ENCODE measurements at regions of chr16 and their contacts with region 1.

Region 1: GRCh38 chr16:31094424-31095120 is at the start of gene VKORC1:
- DNase-seq: peak; percentile 96
- ATAC-seq: peak; percentile 92
- H3K4me3 Mint-ChIP-seq: peak within 1 kb of the TSS; percentile 98
- H3K27ac Mint-ChIP-seq: peak within 1 kb of the TSS; percentile 89
- H3K4me1 Mint-ChIP-seq: peaks cover 25% of the 10 kb centered on the region
- H3K27me3 Mint-ChIP-seq: no peaks in the 10 kb centered on the region
- total RNA-seq, gene VKORC1: 59.6 to 64.2 TPM

Region 2: GRCh38 chr16:30677931-30678585 is 416.5 kb before region 1 on chr16:
- CTCF ChIA-PET with region 1: no interaction called
- POLR2A ChIA-PET with region 1: no interaction called
- intact Hi-C with region 1: no loop called
- DNase-seq: no peak
- ATAC-seq: no peak
- H3K4me3 Mint-ChIP-seq: no peak overlapping the region
- H3K27ac Mint-ChIP-seq: no peak overlapping the region
- H3K4me1 Mint-ChIP-seq: no peaks in the 10 kb centered on the region
- H3K27me3 Mint-ChIP-seq: no peaks in the 10 kb centered on the region

Region 3: DNA sequence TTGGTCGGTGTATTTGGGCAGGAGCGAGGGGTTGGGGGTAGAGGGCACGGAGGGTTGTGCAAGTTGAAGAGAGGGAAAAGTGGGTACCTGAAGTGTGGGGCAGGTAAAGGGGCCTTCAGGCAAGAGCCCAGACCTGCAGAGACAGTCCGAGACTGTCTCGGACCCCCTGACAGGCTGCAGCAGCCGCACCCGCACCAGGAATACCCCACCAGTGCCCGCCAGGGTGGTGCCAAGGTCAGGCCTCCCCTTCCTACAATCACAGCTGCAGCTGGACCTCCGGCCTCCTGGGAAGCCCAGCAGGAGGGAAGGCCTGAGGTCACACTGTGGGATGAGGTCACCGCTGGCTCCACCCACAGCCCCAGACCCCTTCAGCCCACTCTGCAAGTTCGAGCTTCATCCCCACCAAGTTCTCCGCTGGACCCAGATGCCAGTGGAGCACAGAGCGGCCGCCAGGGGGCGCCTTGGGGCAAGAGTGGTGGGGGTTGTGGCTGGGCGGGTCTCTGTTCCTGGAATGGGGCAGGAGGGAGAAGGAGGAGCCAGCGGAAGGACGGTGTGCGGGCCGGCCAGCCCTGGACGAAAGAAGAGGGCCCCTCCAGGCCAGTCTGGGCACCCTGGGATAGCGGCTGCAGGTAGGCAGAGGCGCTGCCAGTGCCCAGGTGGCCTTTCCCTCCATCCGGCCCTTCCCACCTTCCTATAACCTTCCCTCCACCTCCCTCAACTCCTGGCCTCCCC is 109.7 kb before region 1 on chr16 and contains the start of gene HSD3B7:
- CTCF ChIA-PET with region 1: interaction called, 8 read pairs
- POLR2A ChIA-PET with region 1: no interaction called
- intact Hi-C with region 1: loop called (anchors 1 to 10 kb)
- DNase-seq: peak; percentile 91
- ATAC-seq: peak; percentile 92
- H3K4me3 Mint-ChIP-seq: no peak within 1 kb of the TSS
- H3K27ac Mint-ChIP-seq: peak within 1 kb of the TSS; percentile 31
- H3K4me1 Mint-ChIP-seq: peaks cover 3% of the 10 kb centered on the region
- H3K27me3 Mint-ChIP-seq: no peaks in the 10 kb centered on the region
- total RNA-seq, gene HSD3B7: 1.6 to 2.2 TPM

Region 4: DNA sequence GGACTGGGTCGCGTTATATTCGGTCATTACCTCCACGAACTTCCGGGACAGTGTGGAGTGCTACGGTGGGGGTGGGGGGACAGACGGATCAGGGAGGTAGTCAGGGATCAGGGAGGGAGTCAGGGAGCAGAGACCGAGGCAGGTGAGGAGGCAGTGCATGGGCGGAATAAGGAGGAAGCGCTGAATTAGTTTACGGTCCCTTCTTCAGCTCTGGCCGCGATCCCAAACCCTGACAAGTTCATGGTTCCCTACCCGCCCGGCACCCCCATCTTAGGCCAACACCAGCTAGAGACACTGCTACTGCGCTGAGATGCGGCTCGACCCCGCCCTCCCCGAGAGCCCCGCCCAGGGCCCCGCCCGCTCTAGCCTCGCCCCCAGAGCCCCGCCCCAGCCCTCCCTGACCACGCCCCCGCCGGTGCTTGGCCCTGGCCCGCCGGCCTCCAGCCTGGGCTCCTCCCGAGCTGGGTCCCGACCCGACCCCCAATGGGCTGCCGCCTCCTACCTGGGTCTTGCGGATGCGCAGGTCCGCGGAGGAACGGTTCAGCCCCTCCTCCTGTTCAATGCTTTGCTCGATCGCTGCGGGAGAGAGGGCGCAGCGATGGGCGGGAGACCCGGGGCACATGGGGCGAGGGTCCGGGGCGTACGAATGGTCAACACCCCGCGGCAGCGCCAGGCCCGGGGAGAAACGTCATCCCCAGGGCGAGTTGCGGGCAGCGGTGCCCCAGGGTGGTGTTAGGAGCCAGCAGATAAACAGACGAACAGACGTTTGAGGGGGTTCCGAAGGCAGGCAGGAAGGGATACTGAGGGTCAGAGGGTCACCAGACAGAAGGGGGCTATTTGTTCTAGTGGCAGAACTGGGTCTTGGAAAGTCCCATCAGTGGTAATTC is 97.3 kb before region 1 on chr16:
- CTCF ChIA-PET with region 1: interaction called, 5 read pairs
- POLR2A ChIA-PET with region 1: no interaction called
- intact Hi-C with region 1: loop called in 1 of 2 experiments (anchors 1 kb)
- DNase-seq: peak; percentile 94
- ATAC-seq: peak; percentile 95
- H3K4me3 Mint-ChIP-seq: peak overlapping the region; percentile 72
- H3K27ac Mint-ChIP-seq: no peak overlapping the region
- H3K4me1 Mint-ChIP-seq: peaks cover 16% of the 10 kb centered on the region
- H3K27me3 Mint-ChIP-seq: peaks cover 3% of the 10 kb centered on the region

Region 5: GRCh38 chr16:31117391-31118197 is 23.0 kb after region 1 on chr16 and contains the start of gene KAT8:
- CTCF ChIA-PET with region 1: interaction called, 3 read pairs
- POLR2A ChIA-PET with region 1: interaction called, 7 read pairs
- intact Hi-C with region 1: loop called (anchors 1 kb)
- DNase-seq: peak; percentile 99
- ATAC-seq: peak; percentile 93
- H3K4me3 Mint-ChIP-seq: peak within 1 kb of the TSS; percentile 88
- H3K27ac Mint-ChIP-seq: peak within 1 kb of the TSS; percentile 83
- H3K4me1 Mint-ChIP-seq: peaks cover 14% of the 10 kb centered on the region
- H3K27me3 Mint-ChIP-seq: no peaks in the 10 kb centered on the region
- total RNA-seq, gene KAT8: 53.6 to 63.1 TPM